ENCODE measurements at regions of chr11 and their contacts with region 1.

Region 1: GRCh38 chr11:43747130-43747802 is 66.7 kb downstream of the HSD17B12 start:
- DNase-seq: no peak
- ATAC-seq: peak in 1 of 8 donors; percentile 39
- H3K4me3 ChIP-seq: no peak overlapping the region
- H3K27ac ChIP-seq: peak overlapping the region in 2 of 10 donors; percentile 8 to 26
- H3K4me1 ChIP-seq: peaks cover 0 to 11% (median 0%) of the 10 kb centered on the region in 9 donors
- H3K27me3 ChIP-seq: no peaks in the 10 kb centered on the region
- CTCF ChIP-seq: no peak

Region 2: DNA sequence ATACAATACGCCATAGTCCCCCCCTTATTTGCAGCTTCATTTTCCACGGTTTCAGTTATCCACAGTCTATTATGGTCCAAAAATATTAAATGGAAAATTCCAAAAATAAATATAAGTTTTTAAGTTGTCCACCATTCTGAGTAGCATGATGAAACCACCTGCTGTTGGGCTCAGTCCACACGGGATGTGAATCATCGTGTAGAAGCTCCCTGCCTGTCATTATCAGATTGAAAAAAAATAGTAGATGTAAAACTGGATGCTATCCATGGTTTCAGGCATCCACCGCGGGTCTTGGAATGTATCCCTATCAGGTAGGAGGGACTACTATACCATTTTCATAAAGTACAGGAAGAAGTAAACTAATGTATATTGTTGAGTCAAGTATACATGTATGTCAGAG is 261.1 kb before region 1 on chr11:
- intact Hi-C with region 1: no loop called
- DNase-seq: no peak
- ATAC-seq: no peak
- H3K4me3 ChIP-seq: no peak overlapping the region
- H3K27ac ChIP-seq: no peak overlapping the region
- H3K4me1 ChIP-seq: no peaks in the 10 kb centered on the region
- H3K27me3 ChIP-seq: no peaks in the 10 kb centered on the region
- CTCF ChIP-seq: no peak

Region 3: DNA sequence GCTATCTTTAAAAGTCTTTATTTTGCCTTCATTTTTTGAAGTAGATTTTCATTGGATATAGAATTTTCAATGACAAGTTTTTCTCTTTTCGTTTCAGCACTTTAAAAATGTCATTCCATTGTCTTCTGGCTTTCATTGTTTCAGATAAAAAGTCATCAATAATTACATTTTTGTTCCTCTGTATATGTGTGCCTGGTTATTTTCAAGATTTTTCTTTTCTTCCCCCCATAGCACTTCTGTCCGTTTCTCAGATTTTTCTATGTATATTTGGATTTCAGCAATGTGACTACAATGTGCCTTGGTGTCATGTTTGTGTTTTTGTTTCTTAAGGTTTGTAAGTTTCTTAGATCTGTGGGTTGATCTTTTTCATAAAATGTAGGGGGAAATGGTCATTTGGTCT is 133.1 kb before region 1 on chr11:
- intact Hi-C with region 1: no loop called
- DNase-seq: no peak
- ATAC-seq: no peak
- H3K4me3 ChIP-seq: no peak overlapping the region
- H3K27ac ChIP-seq: no peak overlapping the region
- H3K4me1 ChIP-seq: no peaks in the 10 kb centered on the region
- H3K27me3 ChIP-seq: peaks cover 0 to 27% (median 6%) of the 10 kb centered on the region in 7 donors
- CTCF ChIP-seq: no peak

Region 4: DNA sequence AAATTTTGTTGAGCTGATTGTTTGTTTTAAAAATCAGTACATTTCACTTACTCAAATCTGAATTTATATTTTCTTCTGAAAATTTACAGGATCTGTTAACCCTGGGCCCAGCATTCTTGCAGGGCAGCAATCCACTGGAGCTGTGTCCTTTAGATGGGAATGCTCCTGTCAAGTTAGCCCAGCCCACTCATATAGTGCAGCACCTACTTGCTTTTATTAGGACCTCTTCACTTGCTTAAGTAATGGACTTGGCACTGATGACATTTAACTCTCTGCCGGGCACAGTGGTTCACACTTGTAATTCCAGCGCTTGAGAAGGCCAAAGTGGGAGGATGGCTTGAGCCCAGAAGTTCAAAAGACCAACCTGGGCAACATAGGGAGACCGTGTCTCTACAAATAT is 22.9 kb after region 1 on chr11:
- intact Hi-C with region 1: loop called in 1 of 10 experiments (anchors 2 kb)
- DNase-seq: no peak
- ATAC-seq: peak in 6 of 8 donors; percentile 73 to 91 (median 86)
- H3K4me3 ChIP-seq: no peak overlapping the region
- H3K27ac ChIP-seq: peak overlapping the region in 1 of 10 donors; percentile 6
- H3K4me1 ChIP-seq: peaks cover 0 to 9% (median 0%) of the 10 kb centered on the region in 9 donors
- H3K27me3 ChIP-seq: no peaks in the 10 kb centered on the region
- CTCF ChIP-seq: no peak

Region 5: DNA sequence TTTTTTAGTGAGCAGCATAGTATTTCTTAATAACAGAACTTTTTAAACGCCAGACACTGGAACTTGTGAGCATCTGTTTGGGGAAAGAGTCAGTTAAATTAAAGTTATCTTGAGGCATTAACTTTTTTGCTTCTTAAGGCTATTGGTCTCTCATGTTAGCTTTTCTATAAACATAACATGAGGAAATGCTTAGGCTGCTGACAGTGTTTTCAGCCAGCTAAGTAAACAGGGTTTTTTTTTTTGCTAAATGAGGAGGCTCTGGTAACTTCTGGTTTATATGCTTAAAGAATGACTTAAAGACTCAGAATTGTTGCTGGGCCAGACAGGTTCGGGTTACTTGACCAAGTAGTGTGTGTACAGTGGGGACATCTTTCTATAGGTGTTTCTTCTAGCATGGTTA is 37.6 kb after region 1 on chr11:
- intact Hi-C with region 1: loop called in 1 of 10 experiments (anchors 2 kb)
- DNase-seq: no peak
- ATAC-seq: no peak
- H3K4me3 ChIP-seq: no peak overlapping the region
- H3K27ac ChIP-seq: no peak overlapping the region
- H3K4me1 ChIP-seq: peaks cover 0 to 19% (median 0%) of the 10 kb centered on the region in 9 donors
- H3K27me3 ChIP-seq: no peaks in the 10 kb centered on the region
- CTCF ChIP-seq: no peak

Measured in heart right ventricle (tissue), 16 donors.